Left colon (tissue), 2 donors: ENCODE measurements at regions of chr18 and their contacts with region 1.

Region 1: DNA sequence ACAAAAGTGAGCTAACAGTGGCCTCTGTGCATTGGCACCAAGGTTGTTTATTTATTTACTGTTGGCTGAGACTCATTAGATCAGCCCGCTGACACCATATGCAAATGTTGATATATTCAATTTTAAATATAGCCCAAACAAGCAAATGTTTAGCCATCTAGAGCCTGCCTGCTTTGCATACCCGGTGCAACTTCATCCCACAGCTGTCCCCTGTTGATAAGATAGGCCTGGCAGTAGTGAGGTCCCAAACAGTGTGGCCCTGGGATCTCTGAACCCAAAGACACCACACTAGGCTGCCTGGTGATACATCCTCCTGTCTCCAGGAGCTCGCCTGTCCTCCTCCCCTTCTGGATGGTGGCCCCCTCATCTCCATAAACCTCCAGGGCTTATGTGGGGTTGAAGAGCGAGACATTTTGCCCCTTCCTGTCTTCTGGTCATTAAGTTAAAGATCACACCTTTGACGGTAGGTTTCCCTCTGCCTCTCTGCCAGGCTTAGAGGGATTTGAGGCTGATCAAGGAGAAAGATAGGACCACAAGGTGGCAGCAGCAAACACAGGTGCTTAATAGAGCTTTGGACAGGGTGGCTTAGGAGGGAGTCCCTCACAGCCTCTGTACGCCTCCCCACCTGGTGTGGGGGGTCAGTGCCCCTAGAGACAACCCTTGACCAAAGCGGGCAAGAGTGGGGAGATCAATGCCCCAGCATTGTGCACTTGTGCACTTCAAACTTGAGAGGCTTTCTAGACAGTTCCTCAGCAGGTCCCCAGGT is 23.7 kb upstream of the MYO5B start:
- DNase-seq: peak in 1 of 2 donors; percentile 56
- ATAC-seq: peak; percentile 76

Region 2: DNA sequence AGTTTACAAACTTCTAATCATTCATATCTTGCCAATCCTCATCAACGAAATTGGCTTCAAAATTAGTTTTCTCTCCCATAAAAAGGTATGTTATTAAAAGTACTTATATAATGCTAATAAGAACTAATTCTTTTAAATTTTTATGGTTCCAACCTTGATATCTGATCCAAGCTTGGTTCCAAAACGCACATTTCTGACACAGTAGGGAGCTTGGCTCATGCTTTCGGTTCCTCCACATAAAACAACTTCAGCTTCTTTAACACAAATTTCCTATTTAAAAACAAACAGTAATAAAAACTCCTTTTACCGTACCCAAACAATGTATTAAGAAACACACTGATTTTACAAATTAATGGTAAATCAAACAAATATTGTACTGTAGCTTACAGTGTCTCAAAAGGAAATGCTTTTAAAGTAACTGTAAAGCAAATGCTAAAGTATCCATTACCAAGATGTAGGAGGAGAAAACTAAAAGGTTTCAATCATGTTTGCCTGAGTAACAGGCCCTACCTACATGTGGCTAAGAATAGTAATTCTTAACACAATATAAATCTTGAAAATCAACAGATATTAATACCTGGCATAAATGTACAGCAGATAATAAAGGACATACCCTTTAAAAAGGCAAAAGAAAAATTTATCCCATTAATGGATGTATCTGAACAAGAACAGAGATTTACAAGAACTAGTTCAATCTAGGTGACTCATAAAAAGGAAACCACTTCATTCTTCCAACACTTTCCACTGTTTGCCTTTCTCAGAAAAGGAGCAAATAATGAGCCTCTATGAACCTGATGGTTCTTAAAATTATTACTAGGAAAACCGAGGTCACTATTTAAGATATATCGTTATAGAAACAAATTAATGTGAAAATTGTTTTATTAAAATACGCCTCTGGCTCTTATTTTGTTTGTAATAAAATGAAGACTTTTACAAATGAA is 422.7 kb before region 1 on chr18:
- intact Hi-C with region 1: no loop called
- DNase-seq: no peak
- ATAC-seq: no peak

Region 3: DNA sequence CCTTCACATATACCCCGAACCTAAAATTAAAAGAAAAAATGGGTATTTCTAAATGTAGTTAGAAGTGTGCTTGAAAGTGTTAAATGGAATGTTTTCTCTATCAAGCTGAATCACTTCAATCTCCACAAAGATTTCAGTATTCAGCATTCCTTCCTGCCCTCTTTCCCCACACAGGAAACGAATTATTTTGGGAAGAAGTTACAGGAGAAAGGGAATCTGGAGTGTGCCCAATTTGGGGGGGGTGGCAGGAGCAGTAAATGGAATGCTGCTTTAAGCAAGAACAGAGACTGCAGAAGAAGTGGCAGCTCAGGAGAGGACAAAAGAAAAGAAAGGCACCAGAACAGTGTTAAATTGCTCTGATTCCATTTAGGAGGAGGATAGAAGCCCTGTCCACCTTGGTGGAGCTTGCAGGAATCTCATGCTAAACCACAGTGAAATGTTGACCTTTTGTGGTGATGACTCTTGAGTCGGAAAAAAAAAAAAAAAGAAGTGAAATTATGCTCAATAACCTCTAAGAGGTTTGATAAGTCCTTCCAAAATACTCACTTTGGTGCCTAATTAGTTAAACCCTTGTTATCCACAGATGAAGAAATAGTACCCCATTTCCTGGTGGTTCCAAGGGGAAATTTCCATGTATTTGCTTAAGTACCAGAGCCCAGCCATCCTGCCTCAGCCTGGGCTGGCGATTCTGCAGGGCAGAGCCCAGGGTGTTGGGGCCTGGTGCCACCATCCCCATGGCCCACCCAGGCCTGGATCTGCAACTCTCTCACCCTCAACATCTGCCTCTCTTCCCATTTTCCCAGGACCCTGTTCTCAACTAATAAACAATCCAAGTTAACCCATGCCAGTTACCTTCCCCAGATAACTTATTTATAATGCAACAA is 80.2 kb before region 1 on chr18:
- intact Hi-C with region 1: no loop called
- DNase-seq: no peak
- ATAC-seq: no peak

Region 4: DNA sequence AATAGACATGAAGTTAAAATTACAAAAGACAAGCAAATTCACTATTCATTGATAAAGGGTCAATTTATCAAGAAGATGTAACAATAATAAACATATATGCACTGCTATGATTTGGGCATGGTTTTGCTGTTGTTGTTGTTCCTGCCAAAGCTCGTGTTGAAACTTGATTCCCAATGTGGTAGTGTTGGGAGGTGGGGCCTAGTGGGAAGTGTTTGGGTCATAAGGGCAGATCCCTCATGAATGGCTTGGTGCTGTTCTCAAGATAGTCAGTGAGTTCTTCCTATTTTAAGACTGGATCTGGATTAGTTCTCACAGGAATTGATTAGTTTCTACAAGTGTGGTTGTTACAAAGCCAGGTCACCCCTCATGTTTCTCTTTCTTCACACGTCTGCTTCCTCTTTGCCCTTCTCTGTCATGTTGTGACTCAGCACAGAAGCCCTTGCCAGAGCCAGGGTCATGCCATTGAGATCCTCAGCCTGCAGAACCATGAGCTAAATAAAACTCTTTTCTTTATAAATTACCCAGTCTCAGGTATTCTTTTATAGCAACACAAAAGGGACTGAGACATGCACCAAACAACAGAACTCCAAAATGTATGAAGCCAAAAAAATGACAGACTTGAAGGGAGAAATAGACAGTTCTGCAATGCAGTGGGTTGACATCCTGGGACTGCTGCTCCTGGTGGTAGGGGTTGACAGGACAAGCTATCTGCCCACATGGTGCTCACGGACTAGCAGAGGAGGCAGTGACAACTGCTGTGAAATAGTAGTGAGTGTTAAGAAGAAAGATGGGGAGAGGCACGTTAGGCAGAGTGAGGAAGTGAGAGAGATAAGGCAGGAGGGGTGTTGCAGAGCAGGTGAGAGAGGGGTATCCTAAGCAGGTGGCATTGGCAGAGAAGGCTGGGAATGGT is 137.7 kb after region 1 on chr18:
- intact Hi-C with region 1: loop called in 1 of 2 experiments (anchors 5 kb)
- DNase-seq: no peak
- ATAC-seq: peak; percentile 41